ENCODE measurements at regions of chr20 and their contacts with region 1.

Region 1: DNA sequence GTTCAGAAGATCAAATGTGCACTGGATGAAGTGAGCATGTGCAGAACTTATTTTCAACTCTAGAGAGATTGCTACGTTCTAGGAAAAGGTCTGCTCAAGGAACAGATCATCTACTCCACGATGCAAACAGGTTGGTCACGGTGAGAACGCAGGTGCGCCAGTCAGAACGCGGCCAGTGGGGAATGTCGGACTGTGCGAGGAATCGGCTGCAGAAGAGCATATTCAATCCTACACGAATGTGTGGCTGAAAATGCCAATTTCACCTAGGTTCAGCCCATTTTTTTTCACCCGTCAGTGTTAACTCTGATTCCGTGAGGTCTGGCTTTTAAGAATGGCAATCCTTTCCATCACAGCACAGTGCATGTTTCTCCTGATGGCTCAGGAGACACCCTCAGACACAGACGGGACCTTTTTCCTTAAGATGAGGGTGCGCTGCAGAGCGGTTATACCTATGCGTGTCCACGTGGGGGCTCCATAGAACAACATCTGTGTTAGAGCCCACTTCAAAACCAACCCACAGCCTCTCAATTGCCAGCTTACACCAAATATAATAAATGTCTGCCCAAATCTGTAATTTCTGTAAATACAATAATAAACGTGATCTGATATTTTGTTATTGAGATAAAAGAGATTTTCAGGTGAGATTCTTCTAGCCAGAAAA is 250.4 kb downstream of the FOXA2 start:
- DNase-seq: peak in 7 of 10 donors; percentile 20 to 52 (median 33)
- H3K4me3 ChIP-seq: no peak overlapping the region
- H3K27ac ChIP-seq: no peak overlapping the region
- H3K27me3 ChIP-seq: peaks cover 0 to 67% (median 18%) of the 10 kb centered on the region in 45 donors
- CTCF ChIP-seq: peak in 55 of 56 donors; percentile 36 to 77 (median 60)

Region 2: DNA sequence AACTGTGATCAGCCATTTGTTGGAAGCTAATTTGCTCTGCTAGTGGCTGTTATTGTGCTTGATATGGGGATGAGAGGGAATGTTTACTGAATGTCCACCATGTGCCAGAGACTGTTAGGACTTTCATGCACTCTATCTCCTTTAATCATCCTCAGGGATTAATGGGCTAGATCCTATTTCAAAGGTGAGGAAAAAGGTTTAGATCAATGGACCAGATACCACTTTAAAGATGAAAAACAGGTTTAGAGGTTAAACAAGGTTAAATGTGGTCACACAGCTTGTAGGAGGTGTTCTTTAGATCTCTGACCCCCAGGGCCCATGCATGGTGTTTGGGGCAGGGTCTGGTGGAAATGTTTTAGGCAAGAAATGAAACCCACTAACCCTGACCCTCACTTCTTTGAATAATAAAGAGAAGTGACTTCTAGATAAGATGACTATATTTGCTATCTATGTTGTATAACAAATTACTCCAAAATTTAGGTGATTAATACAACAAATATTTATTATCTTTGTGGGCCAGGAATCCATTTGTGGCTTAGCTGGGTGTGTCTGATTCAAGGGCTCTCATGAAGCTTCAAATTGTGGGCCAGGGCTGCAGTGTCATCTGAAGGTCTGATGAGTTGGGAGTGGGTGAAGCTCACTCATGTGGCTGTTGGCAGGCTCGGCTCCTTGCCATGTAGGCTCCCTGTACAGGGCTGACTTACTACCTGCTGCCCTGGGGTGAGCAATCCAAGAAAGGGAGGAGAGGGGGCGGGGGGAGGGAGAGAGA is 378.2 kb after region 1 on chr20:
- intact Hi-C with region 1: no loop called
- DNase-seq: no peak
- H3K4me3 ChIP-seq: no peak overlapping the region
- H3K27ac ChIP-seq: no peak overlapping the region
- H3K27me3 ChIP-seq: peaks cover 0 to 9% (median 0%) of the 10 kb centered on the region in 45 donors
- CTCF ChIP-seq: no peak

Region 3: DNA sequence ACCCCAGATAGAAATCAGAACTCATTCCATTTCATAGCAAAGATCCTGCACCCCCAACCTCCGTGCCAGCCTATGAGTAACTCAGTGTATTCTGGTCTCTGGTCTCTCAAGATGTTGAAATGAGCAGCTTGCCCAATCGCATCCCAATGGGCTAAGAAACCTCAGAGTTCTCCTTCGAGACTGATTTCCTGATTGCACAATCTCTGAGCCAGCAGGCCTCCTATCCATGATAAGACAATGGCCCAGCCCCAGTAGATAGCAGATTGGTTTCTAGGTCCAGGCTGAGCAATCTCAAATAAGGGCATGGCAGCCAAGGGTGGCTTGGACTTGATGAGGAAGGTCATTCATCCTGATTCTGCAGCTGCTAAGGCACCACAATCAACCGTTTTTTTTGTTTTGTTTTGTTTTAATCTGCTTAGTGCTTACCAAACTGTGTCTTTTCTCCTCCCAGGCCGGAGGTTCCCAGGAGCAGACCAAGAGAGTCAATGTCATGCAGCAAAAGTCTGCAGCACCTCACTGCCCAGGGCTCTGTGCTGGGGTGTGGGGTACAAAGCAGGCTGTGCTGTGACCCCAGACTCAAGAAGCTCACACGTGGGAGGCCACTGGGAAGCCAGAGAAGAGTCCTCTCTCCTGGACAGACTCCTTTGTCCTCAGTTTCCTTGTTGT is 891.5 kb after region 1 on chr20:
- intact Hi-C with region 1: loop called in 1 of 2 experiments (anchors 10 kb)
- DNase-seq: peak in 1 of 10 donors; percentile 32
- H3K4me3 ChIP-seq: no peak overlapping the region
- H3K27ac ChIP-seq: no peak overlapping the region
- H3K27me3 ChIP-seq: no peaks in the 10 kb centered on the region
- CTCF ChIP-seq: no peak

Region 4: DNA sequence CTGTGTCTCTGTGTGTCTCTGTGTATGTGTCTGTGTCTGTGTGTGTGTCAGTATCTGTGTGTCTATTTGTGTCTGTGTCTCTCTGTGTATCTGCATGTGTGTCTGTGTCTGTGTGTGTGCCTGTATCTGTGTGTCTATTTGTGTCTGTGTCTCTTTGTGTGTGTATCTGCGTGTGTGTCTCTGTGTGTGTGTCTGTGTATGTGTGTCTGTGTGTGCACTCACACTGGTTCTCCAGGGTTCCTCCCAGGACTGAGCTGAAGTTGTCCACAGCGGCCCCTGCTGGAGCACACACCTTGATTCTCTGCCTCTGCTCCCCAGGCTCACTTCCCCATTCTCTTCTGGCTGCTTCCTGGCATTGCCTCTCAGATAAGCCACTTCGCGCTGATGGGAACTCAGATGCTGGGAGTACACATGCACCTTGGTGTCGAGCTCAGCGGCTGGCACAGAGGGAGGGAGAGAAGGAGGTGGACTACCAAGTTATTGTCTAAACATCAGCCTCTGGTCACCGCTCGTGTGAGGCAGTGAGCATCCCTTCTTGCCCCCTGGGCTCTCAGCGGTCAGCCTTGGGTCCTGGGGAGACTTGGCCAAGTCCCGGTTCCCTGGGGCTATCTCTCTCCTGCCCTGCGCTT is 911.7 kb after region 1 on chr20:
- intact Hi-C with region 1: loop called in 1 of 2 experiments (anchors 10 kb)
- DNase-seq: peak in 4 of 10 donors; percentile 27 to 54 (median 35)
- H3K4me3 ChIP-seq: no peak overlapping the region
- H3K27ac ChIP-seq: no peak overlapping the region
- H3K27me3 ChIP-seq: peaks cover 0 to 6% (median 0%) of the 10 kb centered on the region in 45 donors
- CTCF ChIP-seq: peak in 43 of 56 donors; percentile 12 to 48 (median 32)

Measured in dorsolateral prefrontal cortex (tissue), 120 donors.